Right ventricle myocardium inferior (tissue), 1 donor: ENCODE measurements at regions of chr6 and their contacts with region 1.

Region 1: GRCh38 chr6:109073344-109074132 is 21.1 kb downstream of the SESN1 start:
- DNase-seq: no peak
- ATAC-seq: no peak

Region 2: GRCh38 chr6:108541838-108542759 is 531.4 kb before region 1 on chr6:
- intact Hi-C with region 1: loop called (anchors 2 kb)
- DNase-seq: peak; percentile 83
- ATAC-seq: peak; percentile 77

Region 3: DNA sequence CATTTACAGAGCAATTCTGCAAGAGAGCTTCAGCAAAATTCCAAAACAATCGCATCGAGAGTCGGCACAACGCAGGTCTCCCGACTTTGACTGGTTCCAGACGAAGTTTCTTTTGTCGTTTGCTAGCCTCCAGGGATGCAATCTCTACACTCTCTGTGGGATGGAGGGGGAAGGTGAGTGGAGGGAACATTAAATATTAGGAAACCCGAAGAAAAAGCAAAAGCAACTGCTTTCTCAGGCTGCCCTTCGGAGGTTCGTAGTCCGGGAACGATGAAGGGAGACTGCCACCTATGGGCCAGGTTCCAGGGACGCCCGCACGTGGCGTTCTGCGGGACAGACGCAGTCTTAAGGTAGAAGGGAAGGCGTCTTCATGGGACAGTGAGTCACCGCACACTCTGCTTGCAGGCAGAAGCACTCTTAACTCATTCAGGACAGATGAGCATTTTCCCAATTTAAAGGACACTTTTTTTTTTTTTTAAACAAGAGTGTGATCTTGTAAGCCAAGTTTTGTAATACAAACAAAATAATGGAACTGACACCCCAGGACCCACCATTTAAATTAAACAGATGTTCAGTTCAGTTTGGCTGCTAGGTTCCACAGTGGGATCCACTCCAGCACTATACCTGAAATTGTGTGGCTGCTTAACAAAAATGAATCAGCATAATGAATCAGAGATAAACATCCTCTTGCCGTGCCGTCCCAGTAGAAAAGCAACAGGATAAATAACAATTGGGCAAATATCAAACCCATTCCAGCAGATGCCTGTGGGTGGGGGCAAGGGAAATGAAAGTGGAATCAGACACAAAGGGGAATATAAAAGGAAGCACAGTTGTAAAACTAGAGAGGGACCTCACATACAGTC is 291.1 kb before region 1 on chr6:
- intact Hi-C with region 1: loop called (anchors 10 kb)
- DNase-seq: peak; percentile 92
- ATAC-seq: peak; percentile 91

Region 4: GRCh38 chr6:108896111-108896661 is 177.4 kb before region 1 on chr6:
- intact Hi-C with region 1: loop called (anchors 5 kb)
- DNase-seq: no peak
- ATAC-seq: no peak

Region 5: DNA sequence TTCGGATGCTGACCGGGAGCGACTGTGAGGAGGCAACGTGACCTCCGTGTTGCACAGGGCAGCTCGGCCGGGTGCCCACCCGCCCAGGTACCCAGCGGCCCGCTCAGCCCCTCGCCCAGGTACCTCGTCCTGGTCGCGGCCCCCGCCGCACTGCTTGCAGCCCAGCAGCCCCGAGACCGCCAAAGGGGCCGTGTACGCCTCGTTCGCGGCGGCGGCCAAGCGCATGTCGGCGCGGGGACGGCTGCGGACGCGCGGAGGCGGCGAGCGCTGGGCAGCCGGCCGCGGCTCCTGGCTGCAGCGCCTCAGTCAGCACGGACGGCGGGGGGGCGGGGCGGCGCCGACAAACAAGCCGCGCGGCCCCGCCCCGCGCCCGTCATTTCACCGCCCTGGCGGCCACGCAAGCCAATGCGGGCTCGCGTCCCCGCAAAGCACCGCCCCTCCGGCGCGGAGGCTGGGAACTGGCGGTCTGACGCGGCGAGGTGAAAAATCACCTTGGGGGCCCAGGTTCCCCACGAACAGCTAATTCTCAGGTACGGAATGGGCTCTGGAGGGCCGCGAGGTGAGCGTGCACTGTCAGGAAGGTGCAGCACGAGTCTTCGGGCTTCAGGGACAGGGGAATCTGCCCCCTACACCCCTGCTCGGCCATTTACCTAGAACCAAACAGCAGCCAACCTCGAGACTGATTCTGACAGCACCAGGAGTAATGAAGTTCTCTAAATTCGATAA is 64.1 kb before region 1 on chr6:
- intact Hi-C with region 1: loop called (anchors 5 kb)
- DNase-seq: peak; percentile 99
- ATAC-seq: peak; percentile 97